ENCODE measurements at regions of chr15 and their contacts with region 1.

Region 1: DNA sequence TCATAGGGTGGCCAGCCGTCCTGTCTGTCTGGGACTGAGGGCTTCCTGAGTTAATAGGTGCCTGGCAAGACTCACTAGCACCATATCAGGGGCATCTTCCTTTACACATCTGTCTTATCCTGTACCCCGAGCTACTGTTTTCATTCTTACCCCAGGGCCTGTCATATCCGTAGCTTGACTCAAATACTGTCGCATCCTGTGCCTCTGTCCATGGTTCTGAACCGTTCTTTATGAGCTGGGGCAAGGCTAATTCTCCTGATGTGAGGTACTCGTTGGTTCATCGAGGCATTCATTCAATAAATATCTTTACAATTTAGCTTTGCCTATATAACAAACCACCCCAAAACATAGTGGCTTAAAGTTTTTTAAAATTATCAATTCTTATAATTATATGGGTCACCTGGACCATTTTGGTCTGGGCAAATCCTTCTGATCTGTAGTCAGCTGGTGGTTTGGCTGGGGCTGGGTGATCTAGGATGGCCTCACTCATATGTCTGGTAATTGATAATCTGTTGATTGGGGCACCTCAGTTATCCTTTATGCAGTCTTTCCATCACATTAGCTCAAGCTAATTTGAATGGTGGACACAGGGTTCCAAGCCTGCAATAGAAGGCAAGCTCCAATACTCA is 121.2 kb downstream of the TLE3 start:
- DNase-seq: no peak
- ATAC-seq: no peak
- H3K4me3 Mint-ChIP-seq: no peak overlapping the region
- H3K27ac Mint-ChIP-seq: peak overlapping the region; percentile 25
- H3K4me1 Mint-ChIP-seq: peaks cover 28% of the 10 kb centered on the region
- H3K27me3 Mint-ChIP-seq: peaks cover 33% of the 10 kb centered on the region
- CTCF ChIP-seq: no peak

Region 2: GRCh38 chr15:69760890-69761568 is 215.5 kb before region 1 on chr15:
- CTCF ChIA-PET with region 1: interaction called, 5 read pairs
- POLR2A ChIA-PET with region 1: interaction called, 12 read pairs
- intact Hi-C with region 1: loop called (anchors 1 kb)
- DNase-seq: peak; percentile 41
- ATAC-seq: peak; percentile 71
- H3K4me3 Mint-ChIP-seq: peak overlapping the region; percentile 11
- H3K27ac Mint-ChIP-seq: peak overlapping the region; percentile 57
- H3K4me1 Mint-ChIP-seq: peaks cover 74% of the 10 kb centered on the region
- H3K27me3 Mint-ChIP-seq: no peaks in the 10 kb centered on the region
- CTCF ChIP-seq: no peak

Region 3: GRCh38 chr15:70014860-70015490 is 38.5 kb after region 1 on chr15:
- CTCF ChIA-PET with region 1: interaction called, 4 read pairs
- POLR2A ChIA-PET with region 1: interaction called, 22 read pairs
- intact Hi-C with region 1: loop called (anchors 1 kb)
- DNase-seq: peak; percentile 50
- ATAC-seq: peak; percentile 70
- H3K4me3 Mint-ChIP-seq: peak overlapping the region; percentile 58
- H3K27ac Mint-ChIP-seq: peak overlapping the region; percentile 77
- H3K4me1 Mint-ChIP-seq: peaks cover 84% of the 10 kb centered on the region
- H3K27me3 Mint-ChIP-seq: no peaks in the 10 kb centered on the region
- CTCF ChIP-seq: no peak

Region 4: GRCh38 chr15:70036585-70037291 is 60.3 kb after region 1 on chr15:
- CTCF ChIA-PET with region 1: interaction called, 9 read pairs
- POLR2A ChIA-PET with region 1: interaction called, 22 read pairs
- intact Hi-C with region 1: loop called (anchors 1 kb)
- DNase-seq: no peak
- ATAC-seq: peak; percentile 55
- H3K4me3 Mint-ChIP-seq: peak overlapping the region; percentile 76
- H3K27ac Mint-ChIP-seq: peak overlapping the region; percentile 91
- H3K4me1 Mint-ChIP-seq: peaks cover 67% of the 10 kb centered on the region
- H3K27me3 Mint-ChIP-seq: no peaks in the 10 kb centered on the region
- CTCF ChIP-seq: no peak

Region 5: DNA sequence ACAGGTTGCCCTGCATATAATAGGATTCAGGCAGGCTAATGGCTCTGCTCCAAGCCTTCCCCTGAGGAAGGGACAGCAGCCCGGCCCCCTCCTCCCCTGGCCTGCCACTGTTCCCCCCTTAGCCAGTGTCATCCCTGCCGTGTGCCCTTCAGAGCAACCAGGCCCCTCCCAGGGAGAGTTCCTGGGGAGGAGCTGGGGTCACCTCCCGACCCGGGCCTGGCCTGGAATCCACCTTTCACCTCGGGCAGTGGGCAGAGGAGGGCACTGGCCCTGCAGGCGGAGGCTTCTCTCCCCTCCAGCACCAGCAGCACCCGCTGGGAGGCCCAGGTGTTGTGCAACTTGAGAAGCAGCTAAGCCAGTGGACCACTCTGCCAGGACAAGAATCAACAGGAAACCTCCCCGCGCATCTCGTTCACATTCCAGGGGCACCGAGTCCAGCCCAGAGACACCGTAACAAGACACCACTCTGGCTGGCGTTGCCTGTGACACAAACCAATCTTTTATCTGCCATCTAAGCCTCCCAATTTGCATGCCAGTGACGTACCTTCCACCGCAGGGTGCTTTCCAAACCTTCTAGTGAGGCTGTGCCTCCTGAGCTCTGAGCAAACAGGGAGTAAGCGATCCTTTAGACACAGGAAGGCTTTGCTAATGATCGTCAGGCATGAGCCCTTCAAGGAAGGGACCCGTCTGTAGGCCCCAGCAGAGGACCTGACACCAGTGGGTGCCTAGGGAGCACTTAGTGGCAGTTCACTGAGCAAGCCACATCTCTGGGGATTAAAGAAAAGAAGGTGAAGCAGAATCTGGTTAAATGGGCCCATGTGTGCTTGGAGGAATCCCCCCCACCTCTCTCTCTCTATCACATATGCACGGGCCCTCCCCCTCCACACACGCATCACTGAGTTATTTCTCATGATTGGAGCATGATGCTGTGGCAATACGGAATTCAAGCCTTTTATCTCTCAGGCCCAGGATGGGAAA is 220.1 kb after region 1 on chr15:
- CTCF ChIA-PET with region 1: no interaction called
- POLR2A ChIA-PET with region 1: no interaction called
- intact Hi-C with region 1: loop called (anchors 2 kb)
- DNase-seq: peak; percentile 62
- ATAC-seq: peak; percentile 82
- H3K4me3 Mint-ChIP-seq: peak overlapping the region; percentile 55
- H3K27ac Mint-ChIP-seq: peak overlapping the region; percentile 79
- H3K4me1 Mint-ChIP-seq: peaks cover 58% of the 10 kb centered on the region
- H3K27me3 Mint-ChIP-seq: peaks cover 7% of the 10 kb centered on the region
- CTCF ChIP-seq: no peak

Measured in activated B cell treated with CpG ODN at 0.5 μM for 24 hours (primary cell).